ENCODE measurements at regions of chr3 and their contacts with region 1.

Region 1: GRCh38 chr3:146640955-146641867 is 36.1 kb upstream of the PLSCR5 start:
- DNase-seq: peak; percentile 37
- ATAC-seq: peak; percentile 86
- H3K4me3 ChIP-seq: no peak overlapping the region
- H3K27ac ChIP-seq: no peak overlapping the region
- H3K4me1 ChIP-seq: no peaks in the 10 kb centered on the region
- H3K27me3 ChIP-seq: no peaks in the 10 kb centered on the region
- CTCF ChIP-seq: peak; percentile 58
- POLR2A ChIP-seq: no peak
- RAD21 ChIP-seq: peak; percentile 65

Region 2: GRCh38 chr3:146589899-146590508 is 51.2 kb before region 1 on chr3:
- CTCF ChIA-PET with region 1: interaction called, 5 read pairs
- POLR2A ChIA-PET with region 1: no interaction called
- dilution Hi-C with region 1: no loop called
- in situ Hi-C with region 1: no loop called
- intact Hi-C with region 1: loop called (anchors 1 kb)
- DNase-seq: peak; percentile 52
- ATAC-seq: peak; percentile 71
- H3K4me3 ChIP-seq: no peak overlapping the region
- H3K27ac ChIP-seq: no peak overlapping the region
- H3K4me1 ChIP-seq: no peaks in the 10 kb centered on the region
- H3K27me3 ChIP-seq: no peaks in the 10 kb centered on the region
- CTCF ChIP-seq: peak; percentile 66
- POLR2A ChIP-seq: no peak
- RAD21 ChIP-seq: peak; percentile 52; the same call in 1 of the 2 replicates